ENCODE measurements at regions of chr14 and their contacts with region 1.

Region 1: GRCh38 chr14:72516936-72517700 is 376.8 kb downstream of the DPF3 start:
- DNase-seq: peak; percentile 83
- H3K4me3 ChIP-seq: no peak overlapping the region
- H3K27ac ChIP-seq: no peak overlapping the region
- H3K4me1 ChIP-seq: peaks cover 6% of the 10 kb centered on the region
- H3K27me3 ChIP-seq: peaks cover 2 to 3% of the 10 kb centered on the region in 2 experiments
- CTCF ChIP-seq: peak; percentile 84 to 88
- POLR2A ChIP-seq: no peak

Region 2: GRCh38 chr14:72503696-72504368 is 13.3 kb before region 1 on chr14:
- CTCF ChIA-PET with region 1: interaction called, 13 read pairs
- POLR2A ChIA-PET with region 1: no interaction called
- dilution Hi-C with region 1: no loop called
- intact Hi-C with region 1: no loop called
- DNase-seq: peak; percentile 26
- H3K4me3 ChIP-seq: no peak overlapping the region
- H3K27ac ChIP-seq: no peak overlapping the region
- H3K4me1 ChIP-seq: peaks cover 8% of the 10 kb centered on the region
- H3K27me3 ChIP-seq: peaks cover 2 to 6% of the 10 kb centered on the region in 2 experiments
- CTCF ChIP-seq: no peak
- POLR2A ChIP-seq: no peak

Region 3: DNA sequence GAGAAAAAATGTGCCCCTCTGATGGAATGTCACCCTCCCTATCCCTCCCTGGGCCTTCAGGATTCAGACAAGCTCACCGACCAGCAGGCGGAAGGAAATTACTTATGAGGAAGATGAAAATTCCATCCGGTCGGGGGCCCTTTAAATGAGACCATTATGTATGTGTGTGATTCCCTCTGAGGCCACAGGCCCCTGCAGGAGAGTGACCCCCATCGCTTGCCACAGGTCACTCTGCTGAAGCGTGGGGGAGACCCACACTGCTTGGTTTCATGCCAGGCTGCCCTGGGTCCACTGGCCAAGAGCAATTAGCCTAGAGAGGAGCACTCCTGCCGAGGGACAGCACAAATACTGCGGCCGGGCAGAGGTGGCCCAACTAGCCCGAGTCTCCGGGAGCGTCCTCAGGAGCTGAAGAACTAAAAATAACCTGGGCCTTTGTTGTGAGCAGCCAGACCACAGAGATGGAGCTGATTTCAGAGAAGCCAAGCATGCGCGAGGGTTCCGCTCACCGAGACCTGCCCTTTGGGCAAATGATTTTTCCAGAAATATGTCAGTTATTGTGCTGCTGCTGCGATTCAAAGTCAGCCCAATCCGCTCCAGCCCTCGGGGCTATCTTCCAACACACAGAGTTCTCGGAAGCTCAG is 100.4 kb after region 1 on chr14:
- CTCF ChIA-PET with region 1: interaction called, 3 read pairs
- POLR2A ChIA-PET with region 1: no interaction called
- dilution Hi-C with region 1: no loop called
- intact Hi-C with region 1: loop called (anchors 1 kb)
- DNase-seq: peak; percentile 48
- H3K4me3 ChIP-seq: no peak overlapping the region
- H3K27ac ChIP-seq: peak overlapping the region; percentile 80
- H3K4me1 ChIP-seq: peaks cover 44% of the 10 kb centered on the region
- H3K27me3 ChIP-seq: no peaks in the 10 kb centered on the region
- CTCF ChIP-seq: no peak
- POLR2A ChIP-seq: no peak

Region 4: DNA sequence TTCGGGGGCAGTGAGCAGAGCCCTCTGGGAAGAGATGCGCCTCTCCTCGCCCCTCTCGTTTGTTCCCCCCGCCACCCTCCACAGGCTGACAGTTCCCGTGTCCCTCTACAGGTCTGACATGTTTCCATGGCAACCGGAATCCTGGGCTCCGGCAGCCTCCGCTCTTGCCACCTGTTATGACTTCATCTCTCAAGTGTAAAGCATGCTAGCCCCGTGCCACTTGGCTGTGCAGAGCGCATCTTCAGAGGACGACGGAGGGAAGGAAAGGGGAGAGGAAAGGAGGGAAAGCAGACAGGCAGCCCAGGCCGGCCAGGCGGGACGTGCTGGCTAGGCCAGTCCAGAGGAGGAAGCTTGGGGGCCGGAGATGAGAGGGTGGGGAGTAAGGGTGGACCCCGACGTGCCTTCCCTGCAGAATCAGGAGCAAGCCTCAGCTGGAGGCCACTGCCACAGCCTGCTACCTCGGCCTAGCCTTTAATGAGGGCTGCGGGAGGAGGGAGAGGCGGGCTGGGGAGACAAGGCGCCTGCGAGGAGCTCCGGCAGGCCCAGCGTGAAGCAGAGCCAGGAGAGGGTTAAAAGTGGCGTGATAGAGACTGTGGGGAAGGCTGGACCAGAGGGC is 162.5 kb after region 1 on chr14:
- CTCF ChIA-PET with region 1: interaction called, 19 read pairs
- POLR2A ChIA-PET with region 1: no interaction called
- dilution Hi-C with region 1: no loop called
- intact Hi-C with region 1: loop called (anchors 1 kb)
- DNase-seq: peak; percentile 15
- H3K4me3 ChIP-seq: no peak overlapping the region
- H3K27ac ChIP-seq: peak overlapping the region; percentile 94
- H3K4me1 ChIP-seq: peaks cover 27% of the 10 kb centered on the region
- H3K27me3 ChIP-seq: no peaks in the 10 kb centered on the region
- CTCF ChIP-seq: no peak
- POLR2A ChIP-seq: no peak

Region 5: GRCh38 chr14:72801381-72801812 is 284.3 kb after region 1 on chr14:
- CTCF ChIA-PET with region 1: interaction called, 3 read pairs
- POLR2A ChIA-PET with region 1: no interaction called
- dilution Hi-C with region 1: no loop called
- intact Hi-C with region 1: loop called (anchors 1 kb)
- DNase-seq: peak; percentile 93
- H3K4me3 ChIP-seq: no peak overlapping the region
- H3K27ac ChIP-seq: peak overlapping the region; percentile 95
- H3K4me1 ChIP-seq: peaks cover 22% of the 10 kb centered on the region
- H3K27me3 ChIP-seq: no peaks in the 10 kb centered on the region
- CTCF ChIP-seq: no peak
- POLR2A ChIP-seq: no peak

Region 6: DNA sequence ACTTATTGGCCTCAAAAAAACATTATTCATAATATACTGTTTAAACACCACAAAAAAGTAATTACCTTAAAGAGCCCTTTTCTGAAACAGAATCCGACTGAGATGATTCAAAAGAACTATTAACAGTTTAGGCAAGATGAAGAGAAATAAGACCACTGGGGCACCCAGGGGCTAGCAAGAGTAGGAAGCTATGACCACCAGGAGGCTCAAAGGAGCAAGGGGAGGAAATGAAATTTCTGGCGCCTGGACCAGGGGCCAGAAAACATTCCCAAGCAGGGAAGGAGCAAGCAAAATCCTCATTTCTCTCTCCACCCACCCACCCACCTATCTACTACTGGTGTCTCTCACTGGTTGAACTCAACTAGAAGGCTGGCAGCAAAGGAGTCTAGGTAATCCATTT is 402.9 kb after region 1 on chr14:
- CTCF ChIA-PET with region 1: interaction called, 31 read pairs
- POLR2A ChIA-PET with region 1: no interaction called
- dilution Hi-C with region 1: no loop called
- intact Hi-C with region 1: no loop called
- DNase-seq: no peak
- H3K4me3 ChIP-seq: no peak overlapping the region
- H3K27ac ChIP-seq: no peak overlapping the region
- H3K4me1 ChIP-seq: no peaks in the 10 kb centered on the region
- H3K27me3 ChIP-seq: peaks cover 30 to 39% of the 10 kb centered on the region in 2 experiments
- CTCF ChIP-seq: peak in 1 of 2 donors; percentile 12
- POLR2A ChIP-seq: no peak

Region 7: DNA sequence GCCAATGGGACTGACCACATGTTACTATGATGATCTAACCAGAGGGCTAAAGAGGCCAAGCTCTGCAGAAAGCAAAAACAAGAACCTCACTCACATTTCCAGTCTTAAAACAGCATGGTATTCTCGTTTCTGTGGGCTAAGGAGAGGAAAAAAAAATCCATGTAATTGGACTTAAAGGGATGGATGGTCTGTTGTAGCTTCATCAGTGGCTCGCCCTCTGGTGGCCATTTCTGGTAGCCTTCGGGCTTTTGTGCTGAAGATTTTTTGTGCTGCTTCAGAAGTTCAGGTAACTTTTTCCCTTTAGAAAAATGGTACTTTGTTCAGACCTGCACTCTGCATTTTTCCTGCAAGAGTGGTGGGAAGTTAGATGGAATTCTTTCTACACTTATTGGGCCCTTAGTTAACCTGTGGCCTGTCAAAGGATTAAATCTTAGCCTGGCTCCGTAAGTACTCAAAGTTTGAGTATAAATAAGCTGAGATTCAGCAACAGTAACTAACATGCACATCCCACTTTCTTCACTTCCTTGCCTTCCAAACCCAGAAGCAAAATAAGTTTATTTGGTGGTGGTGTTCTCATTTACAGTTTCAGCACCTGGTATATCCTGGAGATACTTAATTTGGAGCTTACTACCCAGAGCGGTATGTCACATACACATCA is 431.5 kb after region 1 on chr14:
- CTCF ChIA-PET with region 1: interaction called, 751 read pairs
- POLR2A ChIA-PET with region 1: no interaction called
- dilution Hi-C with region 1: no loop called
- intact Hi-C with region 1: loop called (anchors 1 kb)
- DNase-seq: peak; percentile 73
- H3K4me3 ChIP-seq: no peak overlapping the region
- H3K27ac ChIP-seq: no peak overlapping the region
- H3K4me1 ChIP-seq: no peaks in the 10 kb centered on the region
- H3K27me3 ChIP-seq: no peaks in the 10 kb centered on the region
- CTCF ChIP-seq: peak; percentile 87
- POLR2A ChIP-seq: no peak